A549 (cell line): ENCODE measurements at regions of chr1 and their contacts with region 1.

Region 1: DNA sequence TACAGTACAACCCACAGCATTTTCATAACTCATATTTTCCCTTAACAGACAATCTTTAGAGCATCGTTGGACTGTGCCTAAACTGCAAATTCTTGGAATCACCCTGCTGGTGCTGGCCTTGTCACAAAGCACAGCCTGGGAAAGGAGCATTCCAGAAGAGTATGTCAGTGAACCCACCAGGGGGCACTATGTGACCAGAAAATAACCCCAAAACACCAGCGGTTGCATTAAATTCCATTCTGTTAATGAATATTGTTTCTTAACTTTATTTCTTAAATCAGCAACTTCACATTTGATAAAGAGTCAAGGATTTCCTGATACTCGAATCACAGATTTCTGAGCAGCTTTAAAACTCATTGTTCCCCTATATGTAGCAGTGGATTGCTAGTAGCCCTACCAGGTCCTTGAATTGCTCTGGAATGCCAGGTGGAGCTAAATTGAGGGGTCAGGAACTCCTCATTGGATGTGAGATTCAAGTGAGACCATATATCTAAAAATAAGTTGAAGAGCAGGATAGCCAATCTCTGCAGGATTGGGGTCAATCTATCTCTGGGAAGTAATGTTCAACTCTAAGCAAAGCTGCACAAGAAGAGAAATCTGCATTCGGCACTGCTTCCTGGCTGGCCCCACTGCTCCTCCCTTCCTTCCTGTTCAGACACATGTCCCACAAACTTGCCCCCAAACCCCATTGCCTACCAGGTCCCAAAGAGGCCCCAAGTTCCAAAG is 12.7 kb upstream of the RAB4A start:
- DNase-seq: peak; percentile 59 to 72
- ATAC-seq: peak; percentile 87 to 91
- H3K4me3 ChIP-seq: no peak overlapping the region
- H3K27ac ChIP-seq: no peak overlapping the region
- H3K4me1 ChIP-seq: peaks cover 11% of the 10 kb centered on the region
- CTCF ChIP-seq: peak; percentile 96
- EP300 ChIP-seq: no peak
- POLR2A ChIP-seq: no peak
- RAD21 ChIP-seq: peak; percentile 94 to 96

Region 2: DNA sequence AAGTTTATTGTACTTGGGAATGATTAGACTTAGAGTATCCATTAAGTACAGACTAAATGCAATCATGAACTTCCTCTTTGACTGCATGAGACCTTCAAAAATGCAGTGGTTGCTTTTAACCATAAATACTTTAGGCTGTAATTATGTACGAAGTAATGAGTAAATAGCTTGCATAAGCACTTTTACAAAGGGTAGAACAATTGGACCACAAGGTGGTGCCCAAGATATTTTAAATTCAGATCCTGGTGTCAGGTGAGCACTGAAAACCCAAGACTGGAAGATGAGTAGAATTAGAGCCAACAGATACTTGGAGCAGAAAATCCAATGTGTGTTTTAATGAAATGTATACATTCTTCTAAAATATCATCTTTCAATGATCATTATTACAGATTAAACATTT is 566.3 kb before region 1 on chr1:
- CTCF ChIA-PET with region 1: interaction called, 24 read pairs
- POLR2A ChIA-PET with region 1: no interaction called
- DNase-seq: peak; percentile 69 to 72
- ATAC-seq: peak in 1 of 2 experiments; percentile 80; a peak in 4 of 6 replicates
- H3K4me3 ChIP-seq: no peak overlapping the region
- H3K27ac ChIP-seq: no peak overlapping the region
- H3K4me1 ChIP-seq: peaks cover 7% of the 10 kb centered on the region; the same call in 1 of the 3 replicates
- CTCF ChIP-seq: peak; percentile 77
- EP300 ChIP-seq: no peak
- POLR2A ChIP-seq: no peak
- RAD21 ChIP-seq: peak; percentile 87 to 89

Region 3: GRCh38 chr1:229227298-229227919 is 30.8 kb before region 1 on chr1:
- CTCF ChIA-PET with region 1: interaction called, 64 read pairs
- POLR2A ChIA-PET with region 1: interaction called, 3 read pairs
- DNase-seq: peak; percentile 81 to 89
- ATAC-seq: peak; percentile 62 to 78
- H3K4me3 ChIP-seq: no peak overlapping the region
- H3K27ac ChIP-seq: peak overlapping the region; percentile 43 to 52; a peak in 5 of 6 replicates
- H3K4me1 ChIP-seq: peaks cover 81% of the 10 kb centered on the region
- CTCF ChIP-seq: peak; percentile 97
- EP300 ChIP-seq: no peak
- POLR2A ChIP-seq: no peak
- RAD21 ChIP-seq: peak; percentile 95 to 98

Region 4: GRCh38 chr1:229452956-229453801 is 195.0 kb after region 1 on chr1:
- CTCF ChIA-PET with region 1: interaction called, 48 read pairs
- POLR2A ChIA-PET with region 1: no interaction called
- DNase-seq: peak in 1 of 2 experiments; percentile 63
- ATAC-seq: peak; percentile 80 to 85
- H3K4me3 ChIP-seq: no peak overlapping the region
- H3K27ac ChIP-seq: no peak overlapping the region
- H3K4me1 ChIP-seq: no peaks in the 10 kb centered on the region
- CTCF ChIP-seq: peak; percentile 73
- EP300 ChIP-seq: no peak
- POLR2A ChIP-seq: no peak
- RAD21 ChIP-seq: peak; percentile 68 to 76; a peak in 4 of 5 replicates

Region 5: GRCh38 chr1:229479660-229480399 is 221.6 kb after region 1 on chr1:
- CTCF ChIA-PET with region 1: interaction called, 115 read pairs
- POLR2A ChIA-PET with region 1: interaction called, 8 read pairs
- DNase-seq: no peak
- ATAC-seq: no peak
- H3K4me3 ChIP-seq: no peak overlapping the region
- H3K27ac ChIP-seq: no peak overlapping the region
- H3K4me1 ChIP-seq: no peaks in the 10 kb centered on the region
- CTCF ChIP-seq: no peak
- EP300 ChIP-seq: no peak
- POLR2A ChIP-seq: no peak
- RAD21 ChIP-seq: no peak

Region 6: DNA sequence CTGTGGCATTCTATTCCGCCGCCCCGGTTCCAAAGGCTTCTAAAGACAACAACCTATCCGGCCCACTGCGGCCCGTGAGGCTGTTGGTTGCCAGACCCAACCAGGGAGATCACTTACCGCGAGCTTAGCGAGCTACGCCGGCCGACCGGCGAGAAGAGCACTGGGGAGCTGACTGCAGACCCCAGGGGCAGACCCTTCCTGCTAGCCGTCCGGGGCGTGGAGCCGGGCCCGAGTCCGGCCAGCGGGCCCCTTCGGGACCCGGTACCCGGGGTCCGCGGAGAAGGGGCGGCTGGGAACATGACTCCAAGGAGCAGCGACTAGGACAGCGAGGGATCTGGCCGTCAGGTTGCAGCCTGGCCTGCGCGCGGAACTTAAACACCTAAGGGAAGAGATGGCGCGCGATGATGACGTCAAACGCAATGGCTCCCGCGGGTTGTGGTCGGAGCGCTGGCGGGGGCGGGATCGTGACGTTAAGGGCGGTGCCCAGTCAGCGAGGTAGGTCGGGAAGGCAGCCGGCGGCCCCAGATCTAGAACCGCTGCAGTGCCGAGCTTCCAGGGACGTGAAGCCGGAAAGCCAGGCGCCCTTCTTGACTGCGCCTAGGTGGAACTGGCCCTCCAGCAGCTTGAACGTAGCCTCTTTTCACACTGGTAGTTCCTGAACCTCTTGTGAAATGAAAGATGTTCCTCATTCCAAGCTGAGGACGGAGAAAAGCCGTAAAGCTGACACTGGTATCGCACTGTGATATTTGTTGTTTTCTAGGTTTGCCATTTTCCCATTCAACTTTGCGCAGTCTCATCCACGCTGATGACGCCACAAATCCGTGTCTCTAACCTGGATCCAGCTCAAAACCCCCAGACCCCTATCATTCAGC is 250.0 kb after region 1 on chr1 and contains the start of gene NUP133:
- CTCF ChIA-PET with region 1: interaction called, 12 read pairs
- POLR2A ChIA-PET with region 1: no interaction called
- DNase-seq: peak; percentile 93 to 99
- ATAC-seq: peak; percentile 97
- H3K4me3 ChIP-seq: peak within 1 kb of the TSS; percentile 82
- H3K27ac ChIP-seq: peak within 1 kb of the TSS; percentile 90 to 94
- H3K4me1 ChIP-seq: peaks cover 18% of the 10 kb centered on the region
- CTCF ChIP-seq: no peak
- EP300 ChIP-seq: no peak
- POLR2A ChIP-seq: peak; percentile 94
- RAD21 ChIP-seq: no peak
- polyA plus RNA-seq, gene NUP133: 43.2 and 45.9 TPM in 2 replicates

Region 7: GRCh38 chr1:229526695-229527094 is 268.5 kb after region 1 on chr1:
- CTCF ChIA-PET with region 1: interaction called, 13 read pairs
- POLR2A ChIA-PET with region 1: no interaction called
- DNase-seq: no peak
- ATAC-seq: no peak
- H3K4me3 ChIP-seq: no peak overlapping the region
- H3K27ac ChIP-seq: no peak overlapping the region
- H3K4me1 ChIP-seq: no peaks in the 10 kb centered on the region
- CTCF ChIP-seq: no peak
- EP300 ChIP-seq: no peak
- POLR2A ChIP-seq: no peak
- RAD21 ChIP-seq: no peak